ENCODE measurements at regions of chr20 and their contacts with region 1.

Region 1: GRCh38 chr20:13119583-13119982 is 101.5 kb upstream of the ISM1 start:
- DNase-seq: peak in 6 of 9 experiments; percentile 4 to 72 (median 40)
- ATAC-seq: peak; percentile 69
- H3K4me3 ChIP-seq: no peak overlapping the region
- H3K4me3 Mint-ChIP-seq: no peak overlapping the region
- H3K27ac ChIP-seq: no peak overlapping the region
- H3K27ac Mint-ChIP-seq: no peak overlapping the region
- H3K4me1 ChIP-seq: no peaks in the 10 kb centered on the region
- H3K4me1 Mint-ChIP-seq: no peaks in the 10 kb centered on the region
- H3K27me3 ChIP-seq: no peaks in the 10 kb centered on the region
- H3K27me3 Mint-ChIP-seq: peaks cover 4% of the 10 kb centered on the region
- CTCF ChIP-seq: peak; percentile 91

Region 2: GRCh38 chr20:13256606-13257005 is 137.0 kb after region 1 on chr20:
- CTCF ChIA-PET with region 1: interaction called, 105 read pairs
- POLR2A ChIA-PET with region 1: no interaction called
- intact Hi-C with region 1: no loop called
- DNase-seq: no peak
- ATAC-seq: no peak
- H3K4me3 ChIP-seq: no peak overlapping the region
- H3K4me3 Mint-ChIP-seq: no peak overlapping the region
- H3K27ac ChIP-seq: no peak overlapping the region
- H3K27ac Mint-ChIP-seq: no peak overlapping the region
- H3K4me1 ChIP-seq: no peaks in the 10 kb centered on the region
- H3K4me1 Mint-ChIP-seq: peaks cover 2% of the 10 kb centered on the region
- H3K27me3 ChIP-seq: no peaks in the 10 kb centered on the region
- H3K27me3 Mint-ChIP-seq: no peaks in the 10 kb centered on the region
- CTCF ChIP-seq: no peak

Region 3: DNA sequence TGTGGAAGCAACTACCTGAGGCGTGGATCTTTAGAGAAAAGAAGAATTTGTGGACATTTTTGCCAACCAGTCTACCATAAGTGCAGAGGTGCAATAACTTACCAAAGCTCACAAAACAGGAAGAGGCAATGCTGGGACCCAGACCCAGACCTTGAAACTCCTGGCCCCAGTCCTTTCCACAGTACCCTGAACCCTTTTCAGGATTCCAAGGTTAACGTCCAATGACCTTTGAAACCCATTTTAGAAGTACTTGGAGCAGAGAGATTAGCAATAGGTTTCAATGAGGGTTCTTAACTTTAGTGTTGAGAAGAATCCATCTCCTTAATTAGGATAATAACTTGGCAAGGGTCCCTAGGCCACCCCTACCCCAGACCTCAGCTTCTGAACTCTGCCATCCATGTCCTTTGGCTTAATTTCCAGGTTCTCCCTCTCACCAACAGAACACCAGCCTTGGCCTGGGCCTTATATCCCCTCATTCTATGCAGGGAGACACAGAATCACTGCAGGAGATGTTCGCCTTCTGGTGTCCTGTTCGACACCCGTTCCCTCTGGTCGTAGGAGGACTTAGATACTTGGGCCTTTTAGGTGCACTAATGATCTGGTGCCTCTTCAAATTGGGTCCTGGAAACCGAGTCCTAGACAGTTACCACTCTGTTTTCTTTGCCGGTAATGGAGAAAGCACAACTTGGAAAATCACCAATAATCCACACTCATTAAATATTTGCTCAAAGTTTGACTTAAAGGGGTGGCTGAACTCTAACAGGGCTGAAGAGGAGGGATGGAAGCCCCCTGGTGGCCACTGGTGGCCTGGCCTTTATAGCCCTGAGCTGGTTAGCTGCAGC is 142.1 kb after region 1 on chr20:
- CTCF ChIA-PET with region 1: interaction called, 105 read pairs
- POLR2A ChIA-PET with region 1: no interaction called
- intact Hi-C with region 1: loop called (anchors 1 kb)
- DNase-seq: peak; percentile 34 to 75 (median 69)
- ATAC-seq: peak; percentile 84
- H3K4me3 ChIP-seq: no peak overlapping the region
- H3K4me3 Mint-ChIP-seq: no peak overlapping the region
- H3K27ac ChIP-seq: no peak overlapping the region
- H3K27ac Mint-ChIP-seq: no peak overlapping the region
- H3K4me1 ChIP-seq: no peaks in the 10 kb centered on the region
- H3K4me1 Mint-ChIP-seq: peaks cover 4% of the 10 kb centered on the region
- H3K27me3 ChIP-seq: no peaks in the 10 kb centered on the region
- H3K27me3 Mint-ChIP-seq: no peaks in the 10 kb centered on the region
- CTCF ChIP-seq: peak; percentile 80

Region 4: DNA sequence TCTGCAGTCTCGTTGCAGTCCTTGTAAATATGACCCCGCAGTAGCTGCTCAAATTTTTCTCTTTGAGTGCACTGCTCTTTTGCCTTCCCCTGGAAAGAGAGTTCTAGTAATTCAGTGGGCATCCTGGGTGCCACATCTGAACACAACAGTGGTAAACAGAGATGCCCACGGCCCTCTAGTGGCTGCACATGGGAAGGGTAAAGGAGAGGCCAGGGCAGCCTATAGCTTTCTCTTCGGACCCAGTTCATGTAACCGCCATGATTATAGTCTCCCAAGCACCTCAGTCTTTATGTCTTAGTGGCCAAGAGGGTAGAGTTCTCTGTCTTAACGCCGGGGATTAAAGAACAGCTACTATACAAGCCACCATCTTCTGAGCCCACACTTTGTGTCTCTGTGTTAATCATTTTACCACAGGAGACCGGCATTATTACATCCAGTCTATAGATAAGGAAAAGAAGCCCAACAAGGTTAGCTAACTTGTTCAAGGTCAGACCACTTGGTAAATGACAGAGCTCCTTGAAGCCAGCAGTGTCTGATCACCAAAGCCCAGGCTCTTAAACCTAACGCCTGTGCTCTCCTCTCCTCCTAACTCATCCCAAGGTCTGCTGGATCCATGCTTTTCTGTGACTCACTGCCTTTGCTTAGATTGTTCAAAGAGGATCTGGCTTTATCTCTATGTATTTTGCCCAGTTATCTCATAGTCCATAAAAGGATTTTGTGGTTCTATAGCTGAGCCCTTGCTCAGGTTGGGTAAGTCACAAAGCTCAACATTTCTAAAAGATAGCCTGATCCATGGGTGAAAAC is 183.3 kb after region 1 on chr20:
- CTCF ChIA-PET with region 1: interaction called, 31 read pairs
- POLR2A ChIA-PET with region 1: no interaction called
- intact Hi-C with region 1: loop called in 1 of 2 experiments (anchors 2 kb)
- DNase-seq: peak in 6 of 9 experiments; percentile 4 to 37 (median 24)
- ATAC-seq: no peak
- H3K4me3 ChIP-seq: no peak overlapping the region
- H3K4me3 Mint-ChIP-seq: no peak overlapping the region
- H3K27ac ChIP-seq: no peak overlapping the region
- H3K27ac Mint-ChIP-seq: no peak overlapping the region
- H3K4me1 ChIP-seq: no peaks in the 10 kb centered on the region
- H3K4me1 Mint-ChIP-seq: no peaks in the 10 kb centered on the region
- H3K27me3 ChIP-seq: no peaks in the 10 kb centered on the region
- H3K27me3 Mint-ChIP-seq: peaks cover 6% of the 10 kb centered on the region
- CTCF ChIP-seq: peak; percentile 38

Region 5: DNA sequence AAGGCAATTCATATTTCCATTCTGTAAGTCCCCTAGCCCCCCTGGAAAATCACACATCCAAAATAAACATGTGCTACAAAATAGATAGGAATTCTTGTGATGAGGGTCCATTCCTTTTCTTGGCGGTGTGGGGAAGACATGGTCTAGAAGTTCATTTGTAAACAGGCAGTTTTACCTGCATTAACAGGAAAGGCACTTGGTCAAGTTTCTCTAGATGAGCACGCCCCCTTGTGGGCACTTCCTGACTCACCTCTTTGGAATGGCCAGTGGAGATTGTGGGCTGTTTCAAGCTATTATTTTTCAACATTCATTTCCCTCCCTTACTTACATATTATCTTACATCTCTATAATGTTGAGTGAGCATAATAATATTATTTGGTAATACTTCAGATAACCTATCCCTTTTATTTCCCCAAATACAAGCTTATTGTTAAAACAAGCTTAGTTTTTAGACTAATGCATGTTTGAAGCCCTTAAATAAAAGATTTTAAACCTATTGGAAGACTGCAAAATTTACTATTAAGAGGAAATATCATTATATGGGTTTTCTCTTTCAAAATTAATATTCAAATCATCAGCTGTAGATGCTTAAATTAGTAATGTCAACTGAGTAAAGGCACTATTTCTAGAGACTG is 427.0 kb after region 1 on chr20:
- CTCF ChIA-PET with region 1: interaction called, 25 read pairs
- POLR2A ChIA-PET with region 1: no interaction called
- intact Hi-C with region 1: loop called in 1 of 2 experiments (anchors 1 kb)
- DNase-seq: peak; percentile 28 to 75 (median 58)
- ATAC-seq: no peak
- H3K4me3 ChIP-seq: no peak overlapping the region
- H3K4me3 Mint-ChIP-seq: no peak overlapping the region
- H3K27ac ChIP-seq: no peak overlapping the region
- H3K27ac Mint-ChIP-seq: no peak overlapping the region
- H3K4me1 ChIP-seq: no peaks in the 10 kb centered on the region
- H3K4me1 Mint-ChIP-seq: no peaks in the 10 kb centered on the region
- H3K27me3 ChIP-seq: no peaks in the 10 kb centered on the region
- H3K27me3 Mint-ChIP-seq: no peaks in the 10 kb centered on the region
- CTCF ChIP-seq: peak; percentile 72

Region 6: DNA sequence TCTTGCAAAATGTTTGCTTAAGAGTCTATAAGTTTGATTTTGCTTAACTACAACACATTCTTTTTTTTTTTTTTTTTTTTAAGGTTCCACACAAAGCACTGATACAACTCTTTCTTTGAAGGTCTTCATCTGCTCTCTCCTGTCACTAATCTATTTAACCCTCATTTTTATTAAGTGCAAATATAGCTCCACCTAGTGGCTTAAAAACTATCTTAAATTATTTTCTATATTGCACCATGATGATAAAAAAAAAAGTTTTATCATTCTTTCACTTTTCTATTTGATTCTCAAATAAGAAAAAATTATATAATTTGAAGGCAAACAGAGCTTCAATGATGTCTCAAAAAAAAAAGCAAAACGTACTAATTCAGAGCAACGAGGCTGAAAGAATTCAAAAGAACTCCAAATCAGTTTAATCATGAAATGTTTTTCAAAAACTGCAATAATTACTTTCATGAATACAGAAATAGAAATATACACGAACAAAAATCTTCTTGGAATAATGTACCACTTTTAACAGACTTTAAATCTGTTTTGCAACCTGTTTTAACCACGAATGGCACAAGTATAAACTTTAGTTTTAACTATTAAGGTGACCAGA is 652.4 kb after region 1 on chr20:
- CTCF ChIA-PET with region 1: interaction called, 4 read pairs
- POLR2A ChIA-PET with region 1: no interaction called
- intact Hi-C with region 1: loop called (anchors 2 to 5 kb)
- DNase-seq: peak in 1 of 9 experiments; percentile 32
- ATAC-seq: no peak
- H3K4me3 ChIP-seq: no peak overlapping the region
- H3K4me3 Mint-ChIP-seq: no peak overlapping the region
- H3K27ac ChIP-seq: no peak overlapping the region
- H3K27ac Mint-ChIP-seq: no peak overlapping the region
- H3K4me1 ChIP-seq: no peaks in the 10 kb centered on the region
- H3K4me1 Mint-ChIP-seq: peaks cover 8% of the 10 kb centered on the region
- H3K27me3 ChIP-seq: no peaks in the 10 kb centered on the region
- H3K27me3 Mint-ChIP-seq: no peaks in the 10 kb centered on the region
- CTCF ChIP-seq: peak; percentile 70

Region 7: DNA sequence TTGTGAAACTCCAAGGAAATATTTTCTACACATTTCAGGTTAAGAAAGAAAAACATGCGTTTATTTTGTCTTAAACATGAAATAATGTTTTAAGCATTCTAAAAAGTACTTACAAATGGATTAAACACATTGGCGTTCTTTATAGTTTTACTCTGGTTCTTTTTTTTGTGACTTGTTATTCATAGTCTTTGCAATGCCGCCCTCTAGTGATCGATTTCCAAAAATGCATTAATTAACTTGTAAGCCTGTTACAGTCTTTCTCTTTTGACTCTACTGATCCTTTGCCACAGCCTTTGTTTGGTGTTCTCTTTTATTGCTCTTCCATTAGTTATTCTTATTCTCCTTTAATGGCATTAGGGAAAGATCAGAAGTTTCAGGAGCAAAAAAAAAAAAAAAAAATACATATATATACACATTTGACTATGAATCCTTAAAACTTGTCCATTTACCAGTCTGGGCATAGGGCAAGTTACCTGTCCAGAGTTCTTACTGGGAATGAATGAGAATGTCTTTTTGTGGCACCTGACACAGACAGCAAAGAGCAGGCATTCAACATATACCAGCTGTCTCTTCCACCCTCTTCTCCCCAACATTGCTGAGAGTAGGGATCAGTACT is 935.7 kb after region 1 on chr20:
- CTCF ChIA-PET with region 1: interaction called, 3 read pairs
- POLR2A ChIA-PET with region 1: no interaction called
- intact Hi-C with region 1: loop called in 1 of 2 experiments (anchors 10 kb)
- DNase-seq: peak in 2 of 9 experiments; percentile 22 to 38
- ATAC-seq: no peak
- H3K4me3 ChIP-seq: no peak overlapping the region
- H3K4me3 Mint-ChIP-seq: no peak overlapping the region
- H3K27ac ChIP-seq: no peak overlapping the region
- H3K27ac Mint-ChIP-seq: no peak overlapping the region
- H3K4me1 ChIP-seq: no peaks in the 10 kb centered on the region
- H3K4me1 Mint-ChIP-seq: no peaks in the 10 kb centered on the region
- H3K27me3 ChIP-seq: no peaks in the 10 kb centered on the region
- H3K27me3 Mint-ChIP-seq: no peaks in the 10 kb centered on the region
- CTCF ChIP-seq: peak; percentile 28